ENCODE measurements at regions of chr16 and their contacts with region 1.

Region 1: DNA sequence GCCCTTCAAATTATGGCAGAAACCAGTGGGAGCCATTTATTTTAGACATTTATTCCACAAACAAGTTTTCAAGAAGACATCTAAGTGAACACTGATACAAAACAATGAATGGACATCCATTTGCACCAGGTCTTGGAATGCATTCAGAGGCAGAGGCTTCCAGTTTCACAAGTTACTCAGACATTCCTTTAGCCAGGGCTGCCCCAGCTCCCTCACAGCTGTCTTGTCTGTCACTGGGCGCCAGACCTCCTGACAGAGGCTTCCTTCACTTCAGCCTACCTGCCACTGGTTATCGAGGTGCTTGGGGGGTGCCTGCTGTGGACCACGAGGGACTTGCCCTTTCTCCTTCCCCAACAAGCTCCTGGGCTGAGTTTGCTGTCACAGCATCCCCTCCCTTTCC is 19.2 kb downstream of the AQP8 start:
- DNase-seq: no peak
- H3K4me3 Mint-ChIP-seq: no peak overlapping the region
- H3K27ac Mint-ChIP-seq: no peak overlapping the region
- H3K4me1 Mint-ChIP-seq: no peaks in the 10 kb centered on the region
- H3K27me3 Mint-ChIP-seq: no peaks in the 10 kb centered on the region

Region 2: GRCh38 chr16:25143928-25144327 is 92.1 kb before region 1 on chr16:
- CTCF ChIA-PET with region 1: no interaction called
- POLR2A ChIA-PET with region 1: no interaction called
- intact Hi-C with region 1: no loop called
- DNase-seq: no peak
- H3K4me3 Mint-ChIP-seq: no peak overlapping the region
- H3K27ac Mint-ChIP-seq: no peak overlapping the region
- H3K4me1 Mint-ChIP-seq: no peaks in the 10 kb centered on the region
- H3K27me3 Mint-ChIP-seq: no peaks in the 10 kb centered on the region

Region 3: GRCh38 chr16:25569011-25569410 is 333.0 kb after region 1 on chr16:
- CTCF ChIA-PET with region 1: no interaction called
- POLR2A ChIA-PET with region 1: no interaction called
- intact Hi-C with region 1: loop called (anchors 10 kb)
- DNase-seq: no peak
- H3K4me3 Mint-ChIP-seq: no peak overlapping the region
- H3K27ac Mint-ChIP-seq: no peak overlapping the region
- H3K4me1 Mint-ChIP-seq: no peaks in the 10 kb centered on the region
- H3K27me3 Mint-ChIP-seq: peaks cover 2% of the 10 kb centered on the region

Measured in activated CD4-positive, alpha-beta memory T cell treated with anti-CD3 and anti-CD28 coated beads for 36 hours (primary cell).